Breast epithelium (tissue), 4 donors: ENCODE measurements at regions of chr15 and their contacts with region 1.

Region 1: GRCh38 chr15:62492900-62493299 is 327.8 kb upstream of the C2CD4B start:
- DNase-seq: no peak
- H3K4me3 ChIP-seq: no peak overlapping the region
- H3K27ac ChIP-seq: no peak overlapping the region
- H3K4me1 ChIP-seq: no peaks in the 10 kb centered on the region
- H3K27me3 ChIP-seq: no peaks in the 10 kb centered on the region
- CTCF ChIP-seq: no peak
- POLR2A ChIP-seq: no peak

Region 2: DNA sequence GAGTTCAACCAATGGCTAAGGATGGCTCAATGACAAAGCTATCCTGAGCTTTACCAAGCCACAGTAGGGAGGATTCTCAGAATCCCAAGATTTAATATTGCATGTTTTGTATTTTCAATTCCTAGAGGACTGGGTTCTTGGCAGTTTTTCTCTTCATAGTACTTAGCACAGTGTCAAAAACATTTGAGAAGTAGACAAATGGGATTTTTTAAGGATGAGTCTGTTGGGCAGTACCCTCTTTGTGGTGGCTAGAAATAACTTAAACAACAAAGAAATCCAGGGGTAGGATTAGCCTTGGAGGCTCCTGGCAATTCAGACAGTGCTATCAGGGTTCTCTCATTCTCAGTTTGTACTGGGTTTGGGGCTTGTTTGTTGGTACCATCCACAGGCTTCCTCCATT is 1051.0 kb before region 1 on chr15:
- intact Hi-C with region 1: no loop called
- DNase-seq: no peak
- H3K4me3 ChIP-seq: no peak overlapping the region
- H3K27ac ChIP-seq: no peak overlapping the region
- H3K4me1 ChIP-seq: no peaks in the 10 kb centered on the region
- H3K27me3 ChIP-seq: no peaks in the 10 kb centered on the region
- CTCF ChIP-seq: no peak
- POLR2A ChIP-seq: no peak

Region 3: DNA sequence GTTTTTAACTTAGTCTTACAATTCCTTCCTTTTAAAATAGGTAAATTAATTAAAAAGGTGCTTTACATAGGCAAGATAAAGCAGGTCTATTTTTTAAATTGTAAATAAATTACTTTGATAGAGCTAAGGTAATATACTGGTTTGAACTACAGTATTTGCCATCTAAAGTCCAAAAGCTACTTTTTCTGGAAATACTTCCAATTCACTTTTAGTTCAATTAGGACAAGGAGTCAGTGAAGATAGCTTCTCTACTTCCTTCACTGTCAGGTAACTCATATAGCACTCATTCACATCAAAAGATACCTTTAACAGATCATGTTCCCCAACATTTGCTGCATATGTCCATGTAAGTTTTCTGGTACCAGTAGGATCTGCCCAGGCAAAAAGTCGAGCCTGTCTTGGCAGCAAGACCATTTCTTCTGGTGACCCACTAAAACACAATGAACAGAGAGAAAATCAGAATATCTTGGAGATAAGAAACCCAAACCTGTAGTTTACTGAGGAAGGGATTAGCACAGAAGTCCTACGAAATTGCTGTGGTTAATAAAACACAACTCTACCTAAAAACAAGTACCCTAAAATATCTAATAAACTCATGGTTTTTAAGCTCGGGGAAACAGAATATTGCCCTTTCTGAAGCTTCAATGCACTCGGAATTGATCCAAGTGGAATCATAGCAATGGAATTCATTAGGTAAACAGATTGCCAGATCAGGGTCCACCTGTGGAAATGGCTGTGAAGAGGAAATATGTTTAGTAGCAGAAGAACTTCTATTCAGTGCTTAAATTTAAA is 585.7 kb before region 1 on chr15:
- intact Hi-C with region 1: no loop called
- DNase-seq: no peak
- H3K4me3 ChIP-seq: no peak overlapping the region
- H3K27ac ChIP-seq: no peak overlapping the region
- H3K4me1 ChIP-seq: no peaks in the 10 kb centered on the region
- H3K27me3 ChIP-seq: no peaks in the 10 kb centered on the region
- CTCF ChIP-seq: no peak
- POLR2A ChIP-seq: no peak

Region 4: GRCh38 chr15:62524848-62525247 is 31.9 kb after region 1 on chr15:
- intact Hi-C with region 1: loop called (anchors 2 kb)
- DNase-seq: no peak
- H3K4me3 ChIP-seq: no peak overlapping the region
- H3K27ac ChIP-seq: no peak overlapping the region
- H3K4me1 ChIP-seq: no peaks in the 10 kb centered on the region
- H3K27me3 ChIP-seq: no peaks in the 10 kb centered on the region
- CTCF ChIP-seq: no peak
- POLR2A ChIP-seq: no peak